ENCODE measurements at regions of chr7 and their contacts with region 1.

Region 1: DNA sequence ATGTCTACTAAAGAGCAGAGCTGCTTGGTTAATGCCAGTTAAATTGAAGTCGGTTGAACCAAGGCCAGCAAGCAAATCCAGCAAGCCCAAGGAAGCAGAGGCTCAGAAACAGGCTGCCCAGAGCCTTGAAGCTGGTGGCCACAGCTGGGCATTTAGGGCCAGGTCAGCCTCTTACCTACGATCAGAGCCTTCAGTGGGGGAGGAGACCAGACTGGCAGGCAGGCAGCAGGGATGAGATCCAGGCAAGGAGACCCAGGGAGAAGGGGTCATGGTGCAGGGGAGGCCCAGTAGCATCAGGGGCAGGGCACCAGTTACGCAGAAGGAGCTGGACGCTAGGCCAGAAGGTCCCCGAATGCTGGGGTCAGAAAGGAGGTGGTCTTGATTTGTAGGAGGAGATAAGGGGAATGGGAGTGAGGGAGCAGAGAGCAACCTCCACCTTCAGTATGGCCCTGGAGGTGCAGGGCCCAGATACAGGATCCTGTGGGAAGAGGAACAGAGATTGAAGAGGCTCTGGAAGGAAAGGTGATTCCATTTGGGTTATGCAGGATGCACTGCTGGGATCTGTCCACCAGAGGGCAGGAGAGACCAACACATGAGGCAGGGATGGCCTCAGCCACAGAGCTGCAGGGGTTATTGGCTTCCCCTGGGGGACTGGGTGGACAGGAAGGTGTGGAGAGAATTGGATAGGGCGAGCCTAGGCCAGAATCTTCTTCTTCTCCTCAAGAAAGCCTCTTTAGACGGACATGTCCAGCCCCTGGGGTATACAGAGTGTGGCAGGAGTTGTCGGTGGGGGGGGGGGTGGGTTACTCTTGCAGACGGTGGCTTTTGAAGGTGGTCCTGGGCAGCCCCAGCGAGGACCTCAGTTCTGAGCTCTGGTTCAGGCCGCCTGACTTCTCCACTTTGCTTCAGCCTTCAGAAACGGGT is 132.6 kb upstream of the PODXL start:
- ATAC-seq: peak; percentile 25 to 71 (median 60)
- H3K4me3 ChIP-seq: no peak overlapping the region
- H3K27ac ChIP-seq: no peak overlapping the region
- H3K4me1 ChIP-seq: no peaks in the 10 kb centered on the region

Region 2: DNA sequence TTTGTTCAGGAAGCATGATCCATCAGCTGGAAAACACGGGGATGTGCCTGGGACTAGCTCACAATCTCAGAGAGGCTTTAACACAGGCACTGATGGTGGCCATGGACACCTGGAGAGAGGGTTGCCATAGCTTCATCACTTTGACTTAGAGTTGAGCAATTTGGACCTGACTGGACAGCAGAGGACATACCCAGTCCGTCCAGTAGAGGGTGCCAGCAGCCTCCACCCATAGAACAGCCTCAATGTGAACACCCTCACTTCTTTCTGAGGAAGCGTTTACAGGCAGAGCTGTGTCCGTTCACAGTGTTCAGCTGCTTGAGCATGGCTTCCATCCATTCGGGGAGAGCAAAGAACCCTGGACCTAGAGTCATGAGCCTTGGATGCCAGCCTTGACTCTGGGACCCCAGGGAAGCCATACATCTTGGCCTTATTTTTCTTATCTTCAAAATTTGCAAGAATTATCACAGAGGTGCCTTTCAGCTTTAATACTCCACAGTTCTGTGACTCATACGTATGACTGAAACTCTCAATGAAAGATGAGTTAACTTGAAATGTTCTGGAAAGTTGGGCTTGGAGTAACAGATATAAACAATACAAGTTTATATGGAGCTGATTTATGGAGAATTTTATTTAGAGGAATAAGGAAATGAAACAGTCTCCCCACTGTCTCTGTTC is 170.3 kb after region 1 on chr7:
- in situ Hi-C with region 1: loop called in 1 of 9 experiments (anchors 10 kb)
- ATAC-seq: peak; percentile 81 to 99 (median 94)
- H3K4me3 ChIP-seq: no peak overlapping the region
- H3K27ac ChIP-seq: no peak overlapping the region
- H3K4me1 ChIP-seq: peaks cover 0 to 3% of the 10 kb centered on the region in 2 donors

Region 3: DNA sequence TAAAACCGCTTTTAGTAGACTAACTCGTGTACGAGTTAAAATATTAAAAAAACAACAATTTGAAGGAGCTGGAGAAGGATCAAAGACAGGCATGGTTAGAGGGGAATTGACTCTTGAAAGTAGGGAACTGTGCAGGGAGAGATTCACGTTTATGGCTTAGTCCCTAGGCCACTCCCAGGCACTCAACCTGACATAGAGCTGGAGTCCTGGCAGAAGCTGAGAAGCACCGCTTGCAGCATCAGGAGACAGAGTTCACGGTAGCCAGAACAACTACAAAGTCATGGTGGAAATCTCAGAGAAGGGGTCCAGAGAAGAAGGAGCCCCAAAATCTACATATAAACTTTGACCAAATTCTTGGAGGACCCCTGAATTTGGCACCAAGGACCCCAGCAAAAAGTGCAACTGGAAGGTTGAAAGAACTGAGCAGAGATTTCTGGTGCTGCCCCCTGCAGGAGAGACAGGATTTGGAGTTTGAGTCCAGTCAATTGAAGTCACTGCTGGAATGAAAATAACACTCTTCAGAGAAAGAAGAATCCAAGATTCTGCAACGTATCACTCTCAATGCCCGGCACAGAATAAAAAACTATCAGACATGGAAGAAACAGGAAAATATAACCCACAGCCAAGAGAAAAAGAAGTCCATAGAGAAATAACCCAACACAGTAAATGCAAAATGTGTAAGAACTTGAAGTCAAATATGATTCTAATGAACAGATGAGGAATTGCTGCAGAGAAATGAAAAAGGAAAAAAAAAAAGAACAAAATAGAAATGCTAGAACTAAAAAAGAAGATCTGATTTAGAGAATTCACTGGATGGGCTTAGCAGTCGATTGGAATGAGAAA is 360.7 kb after region 1 on chr7:
- in situ Hi-C with region 1: loop called in 1 of 9 experiments (anchors 25 kb)
- ATAC-seq: peak in 2 of 8 experiments; percentile 33 to 41
- H3K4me3 ChIP-seq: no peak overlapping the region
- H3K27ac ChIP-seq: no peak overlapping the region
- H3K4me1 ChIP-seq: no peaks in the 10 kb centered on the region

Region 4: DNA sequence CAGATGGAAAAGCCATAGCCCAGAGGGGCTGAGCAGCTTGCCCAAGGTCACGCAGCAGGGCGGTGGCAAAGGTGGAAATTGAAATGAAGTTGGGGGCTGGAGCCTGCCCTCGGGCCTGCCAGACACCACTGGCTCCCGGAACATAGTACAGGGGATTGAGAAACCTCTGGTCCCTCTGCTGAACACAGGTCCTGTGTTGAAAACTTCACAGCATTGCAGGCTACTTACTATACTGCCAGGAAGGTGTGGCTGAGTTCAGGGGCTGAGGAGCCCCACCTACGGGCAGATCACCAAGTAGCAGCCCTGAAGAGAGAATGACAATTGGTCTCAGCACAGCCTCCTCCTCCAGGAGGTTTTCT is 560.6 kb after region 1 on chr7:
- in situ Hi-C with region 1: loop called in 1 of 9 experiments (anchors 25 kb)
- ATAC-seq: peak in 7 of 8 experiments; percentile 41 to 96 (median 64)
- H3K4me3 ChIP-seq: no peak overlapping the region
- H3K27ac ChIP-seq: no peak overlapping the region
- H3K4me1 ChIP-seq: peaks cover 2 to 3% of the 10 kb centered on the region in 2 donors

Measured in motor neuron (in vitro differentiated cells).